Endothelial cell of umbilical vein (primary cell): ENCODE measurements at regions of chr16 and their contacts with region 1.

Region 1: GRCh38 chr16:72501739-72502593 is 330.0 kb upstream of the PMFBP1 start:
- DNase-seq: peak; percentile 88
- H3K4me3 ChIP-seq: no peak overlapping the region
- H3K27ac ChIP-seq: no peak overlapping the region
- H3K4me1 ChIP-seq: no peaks in the 10 kb centered on the region
- H3K27me3 ChIP-seq: no peaks in the 10 kb centered on the region
- CTCF ChIP-seq: peak; percentile 68 to 75
- POLR2A ChIP-seq: no peak

Region 2: GRCh38 chr16:72241930-72242329 is 260.0 kb before region 1 on chr16:
- CTCF ChIA-PET with region 1: interaction called, 16 read pairs
- POLR2A ChIA-PET with region 1: no interaction called
- dilution Hi-C with region 1: no loop called
- intact Hi-C with region 1: loop called (anchors 1 kb)
- DNase-seq: peak; percentile 66
- H3K4me3 ChIP-seq: no peak overlapping the region
- H3K27ac ChIP-seq: no peak overlapping the region
- H3K4me1 ChIP-seq: no peaks in the 10 kb centered on the region
- H3K27me3 ChIP-seq: no peaks in the 10 kb centered on the region
- CTCF ChIP-seq: peak; percentile 79 to 85
- POLR2A ChIP-seq: no peak

Region 3: GRCh38 chr16:72787514-72788268 is 285.7 kb after region 1 on chr16:
- CTCF ChIA-PET with region 1: no interaction called
- POLR2A ChIA-PET with region 1: no interaction called
- dilution Hi-C with region 1: no loop called
- intact Hi-C with region 1: loop called (anchors 2 kb)
- DNase-seq: peak; percentile 86
- H3K4me3 ChIP-seq: peak overlapping the region; percentile 27 to 57 (median 55)
- H3K27ac ChIP-seq: peak overlapping the region; percentile 95
- H3K4me1 ChIP-seq: peaks cover 7% of the 10 kb centered on the region
- H3K27me3 ChIP-seq: no peaks in the 10 kb centered on the region
- CTCF ChIP-seq: no peak
- POLR2A ChIP-seq: no peak

Region 4: DNA sequence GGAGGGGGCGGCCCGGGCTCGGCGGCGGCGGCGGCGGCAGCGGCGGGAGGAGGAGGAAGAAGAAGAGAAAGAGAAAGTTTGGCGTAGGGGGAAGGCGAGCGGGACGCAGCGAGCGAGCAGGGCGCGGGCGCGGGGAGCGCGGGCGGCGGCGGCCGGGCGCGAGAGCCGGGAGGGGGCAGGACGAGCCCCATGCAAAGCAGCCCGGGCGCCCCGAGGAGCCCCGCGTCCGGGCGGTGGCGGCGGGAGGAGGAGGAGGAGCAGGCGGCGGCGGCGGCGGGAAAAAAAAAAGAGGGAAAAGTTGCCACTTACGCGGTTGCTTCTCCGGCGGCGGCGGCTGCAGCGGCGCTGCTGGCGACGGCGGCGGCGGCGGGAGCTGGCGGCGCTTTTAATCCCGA is 556.3 kb after region 1 on chr16:
- CTCF ChIA-PET with region 1: interaction called, 4 read pairs
- POLR2A ChIA-PET with region 1: no interaction called
- dilution Hi-C with region 1: no loop called
- intact Hi-C with region 1: loop called (anchors 1 kb)
- DNase-seq: peak; percentile 45
- H3K4me3 ChIP-seq: peak overlapping the region; percentile 35 to 94 (median 49)
- H3K27ac ChIP-seq: peak overlapping the region; percentile 65
- H3K4me1 ChIP-seq: peaks cover 61% of the 10 kb centered on the region
- H3K27me3 ChIP-seq: no peaks in the 10 kb centered on the region
- CTCF ChIP-seq: no peak
- POLR2A ChIP-seq: no peak

Region 5: DNA sequence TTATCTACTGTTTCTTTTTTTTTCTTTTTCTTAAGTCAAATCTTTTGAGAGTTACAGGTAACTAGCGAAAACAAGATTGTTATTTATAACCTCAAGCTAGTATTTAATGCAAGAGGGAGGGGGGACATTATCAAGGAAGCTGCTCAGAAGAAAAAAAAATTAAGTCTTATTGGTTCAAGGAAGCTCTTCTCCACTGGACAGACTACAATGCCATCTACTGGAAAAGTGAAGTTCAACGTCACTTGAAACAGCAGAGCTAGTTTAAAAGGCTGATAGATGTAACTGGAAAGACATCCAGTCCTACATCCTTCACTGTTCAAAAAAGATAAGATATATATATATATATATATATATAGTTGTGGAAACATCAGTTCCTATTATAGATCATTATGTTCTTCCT is 1376.6 kb after region 1 on chr16:
- CTCF ChIA-PET with region 1: interaction called, 30 read pairs
- POLR2A ChIA-PET with region 1: no interaction called
- dilution Hi-C with region 1: no loop called
- intact Hi-C with region 1: loop called (anchors 1 kb)
- DNase-seq: peak; percentile 65
- H3K4me3 ChIP-seq: no peak overlapping the region
- H3K27ac ChIP-seq: no peak overlapping the region
- H3K4me1 ChIP-seq: no peaks in the 10 kb centered on the region
- H3K27me3 ChIP-seq: no peaks in the 10 kb centered on the region
- CTCF ChIP-seq: peak in 1 of 2 donors; percentile 34
- POLR2A ChIP-seq: no peak